ENCODE measurements at regions of chr3 and their contacts with region 1.

Region 1: DNA sequence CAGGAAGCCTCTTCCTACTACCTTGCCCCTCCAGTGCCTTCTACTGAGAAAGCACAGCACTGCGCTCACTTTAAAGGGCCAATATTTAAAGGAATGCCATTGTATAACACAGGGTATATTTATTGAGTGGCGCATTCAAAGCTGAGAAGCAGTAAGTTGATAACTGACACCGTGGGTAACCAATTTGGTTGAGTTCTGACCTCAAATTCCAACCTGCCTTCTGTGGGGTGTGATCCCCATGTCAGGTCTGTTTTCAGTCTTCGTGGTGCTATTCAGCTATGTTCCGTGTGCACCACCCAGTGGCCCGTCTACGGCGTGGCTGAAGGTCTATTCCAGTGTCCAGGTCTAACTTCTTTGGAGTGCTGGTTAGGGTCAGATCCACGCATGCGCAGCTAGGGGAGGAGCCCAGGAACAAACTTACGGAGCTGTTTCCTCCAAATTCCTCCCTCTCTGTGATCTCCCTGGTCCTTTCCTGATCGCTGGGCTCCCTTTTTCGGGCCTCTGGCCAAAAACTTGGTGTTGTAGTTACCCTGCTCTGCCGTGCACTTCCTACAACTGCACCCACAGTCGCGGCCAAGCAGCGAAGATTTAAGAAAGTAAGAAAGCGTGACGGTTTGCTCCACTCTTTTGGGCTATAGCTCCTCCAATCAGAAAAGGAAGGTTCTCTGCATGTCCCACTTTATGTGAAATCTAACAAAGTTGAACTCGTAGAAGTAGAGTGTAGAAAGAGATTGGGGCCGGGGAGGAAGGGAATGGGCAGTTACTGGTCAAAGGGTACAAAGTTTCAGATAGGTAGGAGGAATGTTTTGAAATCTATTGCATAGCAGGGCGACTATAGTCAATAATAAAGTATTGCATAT is 7.7 kb downstream of the LRRC2 start:
- DNase-seq: peak; percentile 82
- CTCF ChIP-seq: peak; percentile 88

Region 2: GRCh38 chr3:46538803-46539442 is 19.5 kb before region 1 on chr3:
- CTCF ChIA-PET with region 1: interaction called, 40 read pairs
- POLR2A ChIA-PET with region 1: no interaction called
- DNase-seq: peak; percentile 75
- CTCF ChIP-seq: no peak